ENCODE measurements at regions of chr21 and their contacts with region 1.

Region 1: DNA sequence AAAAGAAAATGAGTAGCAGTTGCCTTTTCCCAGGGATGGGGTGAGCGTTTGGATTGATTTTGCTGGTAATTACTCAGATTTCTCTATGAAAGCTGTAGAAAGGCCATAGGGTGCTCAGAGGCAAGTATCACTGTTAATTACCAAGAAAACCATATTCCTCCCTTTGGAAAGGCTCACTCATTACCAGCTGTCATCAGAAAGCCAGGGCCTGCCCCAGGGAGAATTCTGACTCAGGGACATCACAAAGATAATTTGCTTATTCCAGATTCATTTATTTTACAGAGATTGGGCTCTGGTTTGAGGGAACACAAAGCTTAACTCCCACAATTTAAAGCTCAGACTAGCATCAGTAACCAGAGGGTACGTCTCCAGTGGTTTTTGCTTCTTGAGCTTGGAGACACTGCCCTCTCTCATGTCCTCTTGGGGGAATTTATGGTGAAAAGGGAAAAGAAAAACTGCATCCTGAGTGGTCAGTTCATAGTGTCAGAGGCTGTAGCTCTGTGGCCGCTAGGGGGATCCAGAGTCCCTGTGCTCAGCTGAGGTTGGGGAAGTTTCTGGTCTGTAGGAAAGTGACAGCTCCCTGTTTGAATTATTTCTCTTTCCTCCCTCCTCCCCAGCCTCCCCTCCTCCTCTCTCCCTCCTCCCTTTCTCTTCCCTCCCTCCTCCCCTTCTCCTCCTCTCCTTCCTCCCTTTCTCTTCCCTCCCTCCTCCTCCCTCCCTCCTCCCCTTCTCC is 204.3 kb downstream of the KCNJ6 start:
- H3K4me3 Mint-ChIP-seq: no peak overlapping the region
- H3K27ac Mint-ChIP-seq: no peak overlapping the region
- H3K4me1 Mint-ChIP-seq: no peaks in the 10 kb centered on the region
- H3K27me3 Mint-ChIP-seq: peaks cover 22% of the 10 kb centered on the region

Region 2: DNA sequence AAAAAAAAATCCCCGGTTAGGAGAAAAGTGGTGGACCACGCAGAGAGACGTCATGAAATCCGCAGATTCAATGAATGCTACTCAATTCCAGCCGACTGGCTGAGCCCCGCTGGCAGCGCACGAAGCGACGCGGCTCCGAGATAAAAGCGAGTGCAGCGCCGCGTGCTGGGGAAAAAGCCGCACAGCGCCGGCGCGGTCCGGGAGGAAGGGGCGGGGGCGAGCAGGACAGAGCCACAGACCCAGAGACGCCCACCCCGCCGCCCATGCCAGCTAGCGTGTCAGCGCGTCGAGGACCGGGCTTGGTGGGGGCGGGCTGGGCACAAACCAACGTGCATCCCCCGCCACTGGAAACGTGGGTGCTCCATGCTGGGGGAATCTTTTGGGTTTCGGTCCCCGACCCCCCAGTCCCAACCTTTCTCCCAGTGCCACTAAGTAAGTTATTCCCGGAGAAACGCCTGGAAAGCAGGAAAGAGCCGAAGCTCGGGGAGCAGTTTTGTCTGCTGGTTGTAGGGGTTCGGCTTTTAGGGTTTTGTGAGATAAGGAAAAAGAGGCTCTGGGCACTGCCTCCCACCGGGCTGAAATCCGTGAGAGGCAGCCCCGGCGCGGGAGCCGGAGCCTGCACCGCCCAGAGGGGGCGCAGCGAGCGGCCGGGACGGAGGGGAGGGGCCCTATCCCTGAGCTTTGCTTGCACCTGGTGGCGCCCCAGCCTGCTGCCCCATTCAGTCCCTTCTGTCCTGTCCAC is 204.5 kb after region 1 on chr21 and contains the start of gene KCNJ6:
- intact Hi-C with region 1: loop called (anchors 2 kb)
- H3K4me3 Mint-ChIP-seq: no peak within 1 kb of the TSS
- H3K27ac Mint-ChIP-seq: no peak within 1 kb of the TSS
- H3K4me1 Mint-ChIP-seq: peaks cover 14% of the 10 kb centered on the region
- H3K27me3 Mint-ChIP-seq: peaks cover 72% of the 10 kb centered on the region

Region 3: DNA sequence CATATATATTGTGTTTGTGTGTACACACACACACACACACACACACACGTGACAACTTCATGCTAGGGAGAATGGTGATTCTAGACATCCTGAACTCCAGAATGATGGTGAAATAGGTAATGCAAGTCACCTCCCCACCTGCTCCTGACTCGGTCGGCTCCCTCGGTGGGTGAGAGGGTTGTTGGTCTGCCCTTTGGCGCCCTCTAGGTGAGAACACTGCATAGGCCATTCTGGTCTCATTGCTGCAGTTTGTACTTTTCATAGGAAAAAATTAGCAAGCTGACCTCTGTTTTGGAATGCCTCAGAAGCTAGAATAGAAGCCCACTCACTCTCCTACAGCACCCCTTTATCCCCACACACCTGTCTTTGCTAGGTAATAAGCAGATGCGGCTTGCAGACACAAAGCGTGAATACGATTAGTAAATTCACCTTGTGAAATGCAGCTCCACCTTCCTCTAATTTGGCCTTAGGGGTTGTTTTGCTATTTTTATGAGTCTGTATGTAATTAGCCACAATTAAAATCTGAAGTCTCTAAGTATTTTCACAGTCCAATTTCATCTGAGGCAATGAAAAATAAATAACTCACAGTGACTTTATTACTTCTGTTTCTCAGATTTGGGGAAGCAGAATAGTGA is 414.8 kb after region 1 on chr21:
- intact Hi-C with region 1: loop called (anchors 2 kb)
- H3K4me3 Mint-ChIP-seq: no peak overlapping the region
- H3K27ac Mint-ChIP-seq: no peak overlapping the region
- H3K4me1 Mint-ChIP-seq: no peaks in the 10 kb centered on the region
- H3K27me3 Mint-ChIP-seq: peaks cover 23% of the 10 kb centered on the region